Panc1 (cell line): ENCODE measurements at regions of chr22 and their contacts with region 1.

Region 1: DNA sequence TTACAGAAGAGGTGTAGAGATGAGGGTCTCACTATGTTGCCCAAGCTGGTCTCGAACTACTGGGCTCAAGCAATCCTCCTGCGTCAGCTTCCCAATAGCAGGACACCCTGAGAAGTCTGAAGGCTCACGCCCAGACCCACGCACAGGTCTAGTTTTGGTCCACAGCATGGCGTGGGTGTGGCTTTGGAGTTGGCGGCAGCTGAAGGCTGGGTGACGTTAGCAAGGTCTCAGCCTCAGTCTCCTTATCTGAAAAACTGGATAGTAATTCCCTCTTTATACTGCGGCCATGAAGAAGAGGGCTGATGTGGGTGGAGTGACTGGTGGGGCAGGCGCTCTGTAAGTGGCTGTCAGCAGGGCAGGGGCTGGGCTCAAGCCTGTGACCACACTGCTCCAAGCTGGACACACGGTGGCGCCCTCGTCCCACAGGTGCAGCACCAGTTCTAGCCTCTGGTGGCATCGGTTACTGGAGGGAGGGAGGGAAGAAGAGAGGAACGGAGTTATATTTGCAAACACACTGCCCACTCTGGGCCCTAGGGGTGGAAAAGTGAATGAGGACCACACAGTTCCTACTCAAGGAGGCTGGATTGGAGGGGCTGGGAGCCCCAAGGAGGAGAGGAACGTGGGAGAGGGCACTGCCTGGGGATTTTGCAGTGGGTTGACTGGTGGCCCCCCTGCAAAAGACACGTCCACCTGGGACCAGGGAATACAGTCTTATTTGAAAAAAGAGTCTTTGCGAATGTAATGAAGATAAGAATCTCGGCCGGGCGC is 19.6 kb upstream of the CARD10 start:
- DNase-seq: no peak
- ATAC-seq: peak; percentile 97
- H3K4me3 ChIP-seq: peak overlapping the region in 1 of 2 experiments; percentile 32; a peak in 1 of 4 replicates
- H3K27ac ChIP-seq: no peak overlapping the region
- H3K4me1 ChIP-seq: peaks cover 16% of the 10 kb centered on the region
- H3K27me3 ChIP-seq: no peaks in the 10 kb centered on the region
- CTCF ChIP-seq: peak; percentile 89

Region 2: DNA sequence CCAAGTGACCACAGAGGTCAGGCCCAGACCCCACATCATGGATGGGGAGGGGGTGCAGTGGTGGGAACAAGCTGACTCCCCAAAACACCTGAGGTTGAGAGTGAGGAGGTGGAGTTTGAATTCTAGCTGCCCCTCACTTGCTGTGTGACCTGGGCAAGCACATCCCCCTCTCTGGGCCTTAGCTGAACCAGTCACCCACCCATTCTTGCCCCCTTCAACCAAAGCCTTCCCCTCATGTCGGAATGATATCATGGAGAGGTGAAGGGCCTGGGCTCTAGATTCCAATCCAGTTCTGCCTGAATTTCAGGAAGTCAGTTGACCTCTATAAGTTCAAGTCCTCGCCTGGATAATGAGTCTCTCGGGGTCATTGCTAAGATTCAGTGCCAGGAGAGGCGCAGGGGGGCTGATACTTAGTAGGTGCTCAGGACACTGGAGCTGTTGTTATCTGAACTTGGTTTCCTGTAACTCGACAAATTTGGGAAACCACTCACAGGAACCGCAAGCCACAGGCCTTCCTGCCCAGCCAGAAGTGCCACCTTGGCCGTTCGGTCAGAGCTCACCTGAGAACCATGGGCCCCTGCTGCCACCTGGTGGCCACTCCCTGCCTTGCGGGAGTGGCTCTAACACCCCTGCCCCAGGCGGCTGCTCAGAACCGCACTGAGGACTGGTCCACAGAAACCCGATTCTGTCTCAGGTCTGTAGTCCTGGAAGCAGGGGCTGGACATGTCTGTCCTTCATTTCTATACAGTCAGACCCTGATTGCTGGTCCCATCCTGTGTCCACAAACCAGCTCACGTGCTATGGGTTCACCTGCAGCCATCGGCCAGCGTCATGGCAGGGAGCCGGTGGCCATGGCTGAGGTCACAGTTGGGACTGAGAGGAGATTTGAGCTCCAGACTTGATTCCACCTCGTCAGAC is 28.4 kb after region 1 on chr22:
- CTCF ChIA-PET with region 1: interaction called, 12 read pairs
- POLR2A ChIA-PET with region 1: no interaction called
- in situ Hi-C with region 1: no loop called
- intact Hi-C with region 1: loop called (anchors 2 kb)
- DNase-seq: no peak
- ATAC-seq: peak; percentile 70
- H3K4me3 ChIP-seq: no peak overlapping the region
- H3K27ac ChIP-seq: 0 out of 2 replicates have a peak overlapping the region, but pooled peaks have one; percentile 34
- H3K4me1 ChIP-seq: peaks cover 44% of the 10 kb centered on the region
- H3K27me3 ChIP-seq: no peaks in the 10 kb centered on the region
- CTCF ChIP-seq: peak; percentile 87

Region 3: GRCh38 chr22:37588546-37589215 is 49.9 kb after region 1 on chr22:
- CTCF ChIA-PET with region 1: interaction called, 7 read pairs
- POLR2A ChIA-PET with region 1: no interaction called
- in situ Hi-C with region 1: no loop called
- intact Hi-C with region 1: loop called (anchors 2 kb)
- DNase-seq: no peak
- ATAC-seq: no peak
- H3K4me3 ChIP-seq: no peak overlapping the region
- H3K27ac ChIP-seq: no peak overlapping the region
- H3K4me1 ChIP-seq: no peaks in the 10 kb centered on the region
- H3K27me3 ChIP-seq: no peaks in the 10 kb centered on the region
- CTCF ChIP-seq: no peak

Region 4: DNA sequence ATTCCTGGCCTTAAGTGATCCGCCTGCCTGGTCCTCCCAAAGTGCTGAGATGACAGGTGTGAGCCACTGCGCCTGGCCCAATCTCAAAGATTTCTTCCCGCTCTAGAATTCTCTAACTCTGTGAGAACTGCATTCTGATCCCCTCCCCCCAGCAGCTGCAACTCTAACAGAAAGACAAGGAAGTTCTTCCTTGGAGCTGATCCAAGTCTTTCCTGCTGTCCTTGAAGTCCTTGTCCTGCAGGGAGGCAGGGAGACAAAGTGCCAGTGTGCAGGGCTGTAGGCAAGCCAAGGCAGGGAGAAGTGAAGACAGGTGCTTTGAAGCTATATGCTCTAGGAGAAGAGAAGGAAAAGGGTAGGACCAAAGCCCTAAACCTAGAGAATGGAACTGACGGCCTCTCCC is 60.4 kb after region 1 on chr22:
- CTCF ChIA-PET with region 1: interaction called, 12 read pairs
- POLR2A ChIA-PET with region 1: no interaction called
- in situ Hi-C with region 1: no loop called
- intact Hi-C with region 1: no loop called
- DNase-seq: no peak
- ATAC-seq: no peak
- H3K4me3 ChIP-seq: no peak overlapping the region
- H3K27ac ChIP-seq: no peak overlapping the region
- H3K4me1 ChIP-seq: no peaks in the 10 kb centered on the region
- H3K27me3 ChIP-seq: no peaks in the 10 kb centered on the region
- CTCF ChIP-seq: no peak